MCF 10A (cell line): ENCODE measurements at regions of chr1 and their contacts with region 1.

Region 1: GRCh38 chr1:8727809-8728213 is 89.6 kb downstream of the RERE start:
- DNase-seq: no peak
- H3K4me3 Mint-ChIP-seq: no peak overlapping the region
- H3K27ac Mint-ChIP-seq: no peak overlapping the region
- H3K4me1 Mint-ChIP-seq: peaks cover 9% of the 10 kb centered on the region
- H3K27me3 Mint-ChIP-seq: no peaks in the 10 kb centered on the region
- CTCF ChIP-seq: no peak

Region 2: GRCh38 chr1:8314346-8315280 is 413.2 kb before region 1 on chr1:
- CTCF ChIA-PET with region 1: no interaction called
- POLR2A ChIA-PET with region 1: no interaction called
- intact Hi-C with region 1: loop called (anchors 1 kb)
- DNase-seq: peak; percentile 85
- H3K4me3 Mint-ChIP-seq: no peak overlapping the region
- H3K27ac Mint-ChIP-seq: no peak overlapping the region
- H3K4me1 Mint-ChIP-seq: peaks cover 15% of the 10 kb centered on the region
- H3K27me3 Mint-ChIP-seq: no peaks in the 10 kb centered on the region
- CTCF ChIP-seq: peak; percentile 95

Region 3: DNA sequence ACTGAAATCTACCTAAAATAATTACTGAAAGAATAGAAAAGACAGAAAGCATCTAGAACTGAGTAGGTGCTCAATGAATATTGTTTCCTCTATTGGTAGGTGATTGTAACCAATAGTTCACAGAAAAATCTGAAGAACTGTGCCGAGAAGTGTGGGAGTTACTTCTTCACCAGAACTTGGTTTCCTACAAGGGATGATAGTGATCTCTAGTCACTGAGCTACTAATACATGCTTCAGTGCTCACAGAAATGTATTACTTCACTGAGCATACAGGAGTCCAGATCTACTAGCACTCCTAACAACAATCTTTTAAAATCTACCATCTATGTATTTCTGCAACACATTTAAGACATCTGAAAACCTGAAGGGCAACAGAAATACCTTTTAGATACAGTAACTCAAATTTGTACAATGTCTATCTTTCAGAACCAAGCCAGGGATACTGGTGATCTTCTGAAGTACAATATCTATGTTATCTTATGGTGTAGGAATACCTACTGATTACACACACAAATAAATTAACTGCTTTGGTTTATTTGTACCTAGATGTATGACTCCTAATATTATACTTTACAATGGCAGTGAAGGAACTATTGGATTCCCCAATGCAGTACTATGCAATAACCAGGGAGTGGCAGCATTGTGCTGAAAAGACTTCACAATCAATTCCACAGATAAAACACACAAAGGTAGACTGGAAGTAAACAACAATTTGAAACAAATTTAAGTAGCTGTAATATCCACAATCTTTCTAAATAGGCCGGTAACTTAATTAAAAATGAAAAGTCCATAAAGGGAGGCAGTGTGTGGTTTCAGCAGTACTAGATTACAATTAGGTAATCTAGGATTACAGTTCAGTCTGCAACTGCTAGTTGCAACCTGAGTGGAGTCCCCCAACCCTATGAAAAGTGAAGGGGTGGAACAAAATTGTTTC is 166.9 kb before region 1 on chr1:
- CTCF ChIA-PET with region 1: interaction called, 77 read pairs
- POLR2A ChIA-PET with region 1: interaction called, 11 read pairs
- intact Hi-C with region 1: loop called (anchors 1 kb)
- DNase-seq: peak; percentile 69
- H3K4me3 Mint-ChIP-seq: no peak overlapping the region
- H3K27ac Mint-ChIP-seq: no peak overlapping the region
- H3K4me1 Mint-ChIP-seq: peaks cover 6% of the 10 kb centered on the region
- H3K27me3 Mint-ChIP-seq: no peaks in the 10 kb centered on the region
- CTCF ChIP-seq: peak; percentile 84

Region 4: GRCh38 chr1:8671306-8671917 is 56.4 kb before region 1 on chr1:
- CTCF ChIA-PET with region 1: interaction called, 21 read pairs
- POLR2A ChIA-PET with region 1: interaction called, 5 read pairs
- intact Hi-C with region 1: no loop called
- DNase-seq: peak; percentile 76
- H3K4me3 Mint-ChIP-seq: no peak overlapping the region
- H3K27ac Mint-ChIP-seq: peak overlapping the region; percentile 80
- H3K4me1 Mint-ChIP-seq: peaks cover 44% of the 10 kb centered on the region
- H3K27me3 Mint-ChIP-seq: no peaks in the 10 kb centered on the region
- CTCF ChIP-seq: peak; percentile 81

Region 5: GRCh38 chr1:8740034-8740449 is 12.2 kb after region 1 on chr1:
- CTCF ChIA-PET with region 1: interaction called, 10 read pairs
- POLR2A ChIA-PET with region 1: interaction called, 4 read pairs
- intact Hi-C with region 1: no loop called
- DNase-seq: peak; percentile 57
- H3K4me3 Mint-ChIP-seq: no peak overlapping the region
- H3K27ac Mint-ChIP-seq: peak overlapping the region; percentile 28
- H3K4me1 Mint-ChIP-seq: peaks cover 6% of the 10 kb centered on the region
- H3K27me3 Mint-ChIP-seq: no peaks in the 10 kb centered on the region
- CTCF ChIP-seq: no peak